Naive thymus-derived CD4-positive, alpha-beta T cell (primary cell): ENCODE measurements at regions of chr17 and their contacts with region 1.

Region 1: DNA sequence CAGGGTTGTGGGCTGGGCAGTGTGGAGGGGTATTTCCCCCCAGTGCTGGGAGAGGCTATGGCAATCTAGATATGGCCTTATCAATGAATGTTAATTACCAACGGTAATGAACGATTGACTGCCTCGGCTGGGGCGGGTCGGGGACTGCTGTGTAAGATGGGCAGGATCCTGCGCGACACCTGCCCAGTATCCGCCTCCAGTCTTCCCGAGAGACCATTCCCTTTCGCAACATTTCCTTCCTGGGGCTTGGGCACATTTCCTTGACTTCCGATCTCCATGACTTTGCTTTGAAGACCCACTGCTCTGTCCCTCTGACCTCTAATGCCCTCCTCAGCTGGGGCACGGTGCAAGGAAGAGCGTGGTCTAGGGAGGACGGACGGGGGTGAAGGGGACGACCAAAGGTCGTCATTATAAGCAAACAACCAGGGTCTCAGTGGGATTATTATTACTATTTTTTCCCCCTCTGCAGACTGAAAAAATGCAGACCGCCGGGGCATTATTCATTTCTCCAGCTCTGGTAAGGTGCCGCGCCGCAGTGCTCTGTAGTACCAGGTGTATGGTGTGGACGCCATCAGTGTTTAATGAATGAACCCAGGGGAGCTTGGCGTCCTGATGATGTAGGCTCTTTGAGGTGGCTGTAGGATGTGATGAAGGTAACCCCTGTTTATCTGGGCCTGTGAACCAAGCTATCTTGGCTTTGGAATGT is 506 bp downstream of the ATP5MC1 start:
- DNase-seq: peak in 2 of 9 donors; percentile 11 to 14
- ATAC-seq: no peak
- H3K4me3 ChIP-seq: peak overlapping the region; percentile 60
- H3K4me3 Mint-ChIP-seq: peak overlapping the region; percentile 87 to 98 (median 94)
- H3K27ac ChIP-seq: peak overlapping the region; percentile 82
- H3K27ac Mint-ChIP-seq: peak overlapping the region; percentile 91 to 100 (median 93)
- H3K4me1 ChIP-seq: peaks cover 5 to 16% of the 10 kb centered on the region in 2 donors
- H3K4me1 Mint-ChIP-seq: peaks cover 17 to 42% (median 29%) of the 10 kb centered on the region in 7 donors
- H3K27me3 ChIP-seq: no peaks in the 10 kb centered on the region
- H3K27me3 Mint-ChIP-seq: peaks cover 0 to 3% (median 0%) of the 10 kb centered on the region in 5 donors

Region 2: GRCh38 chr17:47649153-47649971 is 1243.7 kb before region 1 on chr17 and contains the start of gene KPNB1:
- CTCF ChIA-PET with region 1: no interaction called
- POLR2A ChIA-PET with region 1: no interaction called
- intact Hi-C with region 1: loop called in 1 of 2 experiments (anchors 2 kb)
- DNase-seq: peak; percentile 85 to 97 (median 97)
- ATAC-seq: peak; percentile 90
- H3K4me3 ChIP-seq: peak within 1 kb of the TSS; percentile 55
- H3K4me3 Mint-ChIP-seq: peak within 1 kb of the TSS; percentile 92 to 100 (median 99)
- H3K27ac ChIP-seq: peak within 1 kb of the TSS; percentile 80
- H3K27ac Mint-ChIP-seq: peak within 1 kb of the TSS; percentile 92 to 100 (median 98)
- H3K4me1 ChIP-seq: peaks cover 26 to 34% of the 10 kb centered on the region in 2 donors
- H3K4me1 Mint-ChIP-seq: peaks cover 40 to 67% (median 53%) of the 10 kb centered on the region in 7 donors
- H3K27me3 ChIP-seq: no peaks in the 10 kb centered on the region
- H3K27me3 Mint-ChIP-seq: no peaks in the 10 kb centered on the region
- total RNA-seq, gene KPNB1: 185 to 465 (median 255) TPM

Region 3: DNA sequence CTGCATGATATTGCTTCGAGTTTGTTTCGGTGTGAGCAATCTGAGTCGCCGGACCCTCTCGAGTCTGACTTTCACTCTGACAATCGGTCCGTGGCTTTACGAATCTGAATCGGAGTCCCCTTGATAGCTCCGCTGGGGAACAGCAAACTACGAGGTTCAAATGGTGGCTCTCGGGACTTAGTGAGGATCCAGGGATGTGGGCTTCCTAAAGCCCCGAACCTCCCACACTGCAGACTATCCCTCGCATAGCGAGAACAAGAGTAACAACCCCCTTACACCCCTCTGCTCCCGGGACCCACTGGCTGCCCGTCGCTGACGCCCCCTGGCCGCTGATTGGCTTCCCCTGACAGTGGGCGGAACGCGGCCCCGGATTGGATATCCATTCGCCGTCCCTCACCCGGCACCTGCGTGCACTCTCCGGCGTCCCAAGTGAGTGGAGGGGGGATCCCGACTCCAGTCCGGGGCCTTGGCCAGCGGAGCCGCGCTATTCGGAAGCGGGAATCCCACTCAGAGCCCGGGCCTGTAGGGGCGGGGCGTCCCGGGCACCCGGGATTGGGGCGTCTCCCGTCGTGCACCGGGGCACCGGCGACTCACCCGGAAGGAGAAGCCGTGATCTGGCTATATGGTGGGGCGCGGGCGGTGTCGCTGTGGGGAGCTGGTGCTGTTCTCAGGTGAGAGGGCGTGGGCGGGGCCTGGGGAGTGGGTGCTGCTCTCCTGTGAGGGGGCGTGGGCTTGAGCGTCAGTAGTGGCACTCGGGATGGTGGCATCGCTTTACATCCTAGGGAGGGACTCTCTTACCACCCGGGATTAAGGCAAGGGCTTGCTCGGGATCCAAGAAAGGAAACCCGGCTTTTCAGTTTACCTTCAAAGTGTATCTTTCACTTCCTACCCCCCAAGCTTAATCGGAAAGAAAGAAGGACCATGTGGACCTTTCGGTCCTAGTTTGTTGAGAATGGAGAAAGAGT is 785.6 kb before region 1 on chr17 and contains the start of gene SNX11:
- CTCF ChIA-PET with region 1: no interaction called
- POLR2A ChIA-PET with region 1: interaction called, 3 read pairs
- intact Hi-C with region 1: loop called in 1 of 2 experiments (anchors 10 kb)
- DNase-seq: peak; percentile 85 to 97 (median 94)
- ATAC-seq: peak; percentile 96
- H3K4me3 ChIP-seq: peak within 1 kb of the TSS; percentile 97
- H3K4me3 Mint-ChIP-seq: peak within 1 kb of the TSS; percentile 92 to 99 (median 96)
- H3K27ac ChIP-seq: peak within 1 kb of the TSS; percentile 89
- H3K27ac Mint-ChIP-seq: peak within 1 kb of the TSS; percentile 89 to 96 (median 93)
- H3K4me1 ChIP-seq: peaks cover 19 to 20% of the 10 kb centered on the region in 2 donors
- H3K4me1 Mint-ChIP-seq: peaks cover 45 to 68% (median 62%) of the 10 kb centered on the region in 7 donors
- H3K27me3 ChIP-seq: no peaks in the 10 kb centered on the region
- H3K27me3 Mint-ChIP-seq: no peaks in the 10 kb centered on the region
- total RNA-seq, gene SNX11: 12.3 to 35.1 (median 16.7) TPM

Region 4: GRCh38 chr17:48908047-48908843 is 15.2 kb after region 1 on chr17 and contains the start of gene UBE2Z:
- CTCF ChIA-PET with region 1: interaction called, 9 read pairs
- POLR2A ChIA-PET with region 1: interaction called, 62 read pairs
- intact Hi-C with region 1: loop called (anchors 1 kb)
- DNase-seq: peak; percentile 71 to 86 (median 84)
- ATAC-seq: peak; percentile 96
- H3K4me3 ChIP-seq: peak within 1 kb of the TSS; percentile 62
- H3K4me3 Mint-ChIP-seq: peak within 1 kb of the TSS; percentile 90 to 100 (median 96)
- H3K27ac ChIP-seq: peak within 1 kb of the TSS; percentile 93
- H3K27ac Mint-ChIP-seq: peak within 1 kb of the TSS; percentile 95 to 99 (median 98)
- H3K4me1 ChIP-seq: peaks cover 22 to 33% of the 10 kb centered on the region in 2 donors
- H3K4me1 Mint-ChIP-seq: peaks cover 32 to 52% (median 50%) of the 10 kb centered on the region in 7 donors
- H3K27me3 ChIP-seq: no peaks in the 10 kb centered on the region
- H3K27me3 Mint-ChIP-seq: no peaks in the 10 kb centered on the region
- total RNA-seq, gene UBE2Z: 71.6 to 96.6 (median 91.8) TPM

Region 5: GRCh38 chr17:48997083-48997826 is 104.2 kb after region 1 on chr17 and contains the start of gene IGF2BP1:
- CTCF ChIA-PET with region 1: no interaction called
- POLR2A ChIA-PET with region 1: interaction called, 3 read pairs
- intact Hi-C with region 1: loop called in 1 of 2 experiments (anchors 5 kb)
- DNase-seq: peak in 4 of 9 donors; percentile 15 to 31 (median 23)
- ATAC-seq: peak; percentile 24
- H3K4me3 ChIP-seq: peak within 1 kb of the TSS; percentile 12
- H3K4me3 Mint-ChIP-seq: peak within 1 kb of the TSS; percentile 64 to 82 (median 72)
- H3K27ac ChIP-seq: no peak within 1 kb of the TSS
- H3K27ac Mint-ChIP-seq: peak within 1 kb of the TSS in 2 of 9 donors; percentile 65 to 82
- H3K4me1 ChIP-seq: peaks cover 8 to 22% of the 10 kb centered on the region in 2 donors
- H3K4me1 Mint-ChIP-seq: peaks cover 14 to 40% (median 23%) of the 10 kb centered on the region in 7 donors
- H3K27me3 ChIP-seq: peaks cover 35 to 74% of the 10 kb centered on the region in 2 donors
- H3K27me3 Mint-ChIP-seq: peaks cover 79 to 88% (median 84%) of the 10 kb centered on the region in 5 donors
- total RNA-seq, gene IGF2BP1: not detected

Region 6: GRCh38 chr17:49260011-49260921 is 367.2 kb after region 1 on chr17:
- CTCF ChIA-PET with region 1: no interaction called
- POLR2A ChIA-PET with region 1: no interaction called
- intact Hi-C with region 1: no loop called
- DNase-seq: peak; percentile 4 to 76 (median 30)
- ATAC-seq: peak; percentile 80
- H3K4me3 ChIP-seq: peak overlapping the region; percentile 64
- H3K4me3 Mint-ChIP-seq: peak overlapping the region; percentile 63 to 86 (median 82)
- H3K27ac ChIP-seq: no peak overlapping the region
- H3K27ac Mint-ChIP-seq: peak overlapping the region in 1 of 9 donors; percentile 55
- H3K4me1 ChIP-seq: peaks cover 5 to 6% of the 10 kb centered on the region in 2 donors
- H3K4me1 Mint-ChIP-seq: peaks cover 0 to 10% (median 8%) of the 10 kb centered on the region in 7 donors
- H3K27me3 ChIP-seq: no peaks in the 10 kb centered on the region
- H3K27me3 Mint-ChIP-seq: peaks cover 0 to 22% (median 8%) of the 10 kb centered on the region in 5 donors

Region 7: GRCh38 chr17:49361902-49362722 is 469.0 kb after region 1 on chr17 and contains the start of gene ZNF652:
- CTCF ChIA-PET with region 1: no interaction called
- POLR2A ChIA-PET with region 1: no interaction called
- intact Hi-C with region 1: loop called in 1 of 2 experiments (anchors 1 kb)
- DNase-seq: peak; percentile 86 to 98 (median 97)
- ATAC-seq: peak; percentile 81
- H3K4me3 ChIP-seq: peak within 1 kb of the TSS; percentile 67
- H3K4me3 Mint-ChIP-seq: peak within 1 kb of the TSS; percentile 88 to 99 (median 96)
- H3K27ac ChIP-seq: peak within 1 kb of the TSS; percentile 71
- H3K27ac Mint-ChIP-seq: peak within 1 kb of the TSS; percentile 92 to 97 (median 97)
- H3K4me1 ChIP-seq: peaks cover 26 to 33% of the 10 kb centered on the region in 2 donors
- H3K4me1 Mint-ChIP-seq: peaks cover 48 to 58% (median 53%) of the 10 kb centered on the region in 7 donors
- H3K27me3 ChIP-seq: no peaks in the 10 kb centered on the region
- H3K27me3 Mint-ChIP-seq: no peaks in the 10 kb centered on the region
- total RNA-seq, gene ZNF652: 33.8 to 64.4 (median 49.9) TPM